Mammary epithelial cell (primary cell): ENCODE measurements at regions of chr17 and their contacts with region 1.

Region 1: DNA sequence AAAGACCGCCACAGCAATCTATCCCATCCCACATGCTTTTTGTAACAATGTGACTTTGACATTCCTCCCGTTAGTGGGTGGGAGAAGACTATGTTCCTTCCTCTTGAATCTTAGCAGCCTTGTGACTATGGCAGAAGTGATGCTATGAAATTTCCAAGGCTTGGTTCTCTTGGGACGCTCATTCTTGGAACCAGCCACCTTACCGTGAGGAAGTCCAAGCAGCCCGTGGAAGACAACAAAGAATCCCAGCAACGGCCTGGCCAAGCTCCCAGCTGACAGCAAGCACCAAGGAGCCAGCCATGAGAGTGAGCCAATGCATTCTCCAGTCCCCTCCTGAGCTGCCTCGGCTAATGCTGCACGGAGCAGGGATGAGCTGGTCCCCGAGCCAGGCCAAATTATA is 62.3 kb downstream of the VPS53 start:
- DNase-seq: no peak
- H3K4me3 ChIP-seq: no peak overlapping the region
- H3K27ac ChIP-seq: no peak overlapping the region
- H3K4me1 ChIP-seq: no peaks in the 10 kb centered on the region
- H3K27me3 ChIP-seq: no peaks in the 10 kb centered on the region
- CTCF ChIP-seq: no peak

Region 2: GRCh38 chr17:565521-565920 is 86.8 kb before region 1 on chr17:
- CTCF ChIA-PET with region 1: no interaction called
- dilution Hi-C with region 1: loop called (anchors 5 kb)
- in situ Hi-C with region 1: no loop called
- intact Hi-C with region 1: no loop called
- DNase-seq: no peak
- H3K4me3 ChIP-seq: no peak overlapping the region
- H3K27ac ChIP-seq: no peak overlapping the region
- H3K4me1 ChIP-seq: peaks cover 29% of the 10 kb centered on the region
- H3K27me3 ChIP-seq: no peaks in the 10 kb centered on the region
- CTCF ChIP-seq: peak in 1 of 2 donors; percentile 23

Region 3: GRCh38 chr17:606508-607250 is 45.6 kb before region 1 on chr17:
- CTCF ChIA-PET with region 1: no interaction called
- dilution Hi-C with region 1: loop called (anchors 5 kb)
- in situ Hi-C with region 1: no loop called
- intact Hi-C with region 1: no loop called
- DNase-seq: no peak
- H3K4me3 ChIP-seq: no peak overlapping the region
- H3K27ac ChIP-seq: no peak overlapping the region
- H3K4me1 ChIP-seq: no peaks in the 10 kb centered on the region
- H3K27me3 ChIP-seq: no peaks in the 10 kb centered on the region
- CTCF ChIP-seq: no peak